Cardiac septum (tissue), 1 donor: ENCODE measurements at regions of chr7 and their contacts with region 1.

Region 1: GRCh38 chr7:4775250-4775847 is at the start of gene AP5Z1:
- DNase-seq: peak; percentile 98
- total RNA-seq, gene AP5Z1: 15.9 TPM

Region 2: GRCh38 chr7:4235596-4235995 is 539.8 kb before region 1 on chr7:
- intact Hi-C with region 1: no loop called
- DNase-seq: peak; percentile 72

Region 3: DNA sequence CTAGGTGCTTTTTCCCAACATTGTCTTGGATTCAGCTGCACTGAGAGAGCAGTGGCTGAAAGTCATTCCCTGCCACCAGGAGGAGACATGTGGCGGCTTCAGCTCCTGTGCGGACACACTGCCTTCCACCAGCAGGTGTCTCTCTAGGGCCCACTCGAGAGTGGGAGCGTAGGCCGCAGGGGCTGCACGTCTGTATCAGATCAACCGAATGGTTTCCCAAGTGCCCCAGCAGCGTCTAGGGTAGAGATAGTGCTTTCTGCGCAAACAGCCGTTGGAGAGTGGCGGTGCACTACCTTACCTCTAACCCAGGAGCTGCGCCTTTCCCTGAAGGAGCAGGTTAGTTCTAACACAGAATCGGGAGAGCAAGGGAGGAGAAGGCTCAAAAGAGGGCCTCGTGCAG is 54.8 kb after region 1 on chr7:
- intact Hi-C with region 1: no loop called
- DNase-seq: no peak

Region 4: GRCh38 chr7:4973728-4974198 is 198.4 kb after region 1 on chr7:
- intact Hi-C with region 1: loop called (anchors 10 kb)
- DNase-seq: peak; percentile 97